Sigmoid colon (tissue), 7 donors: ENCODE measurements at regions of chr1 and their contacts with region 1.

Region 1: DNA sequence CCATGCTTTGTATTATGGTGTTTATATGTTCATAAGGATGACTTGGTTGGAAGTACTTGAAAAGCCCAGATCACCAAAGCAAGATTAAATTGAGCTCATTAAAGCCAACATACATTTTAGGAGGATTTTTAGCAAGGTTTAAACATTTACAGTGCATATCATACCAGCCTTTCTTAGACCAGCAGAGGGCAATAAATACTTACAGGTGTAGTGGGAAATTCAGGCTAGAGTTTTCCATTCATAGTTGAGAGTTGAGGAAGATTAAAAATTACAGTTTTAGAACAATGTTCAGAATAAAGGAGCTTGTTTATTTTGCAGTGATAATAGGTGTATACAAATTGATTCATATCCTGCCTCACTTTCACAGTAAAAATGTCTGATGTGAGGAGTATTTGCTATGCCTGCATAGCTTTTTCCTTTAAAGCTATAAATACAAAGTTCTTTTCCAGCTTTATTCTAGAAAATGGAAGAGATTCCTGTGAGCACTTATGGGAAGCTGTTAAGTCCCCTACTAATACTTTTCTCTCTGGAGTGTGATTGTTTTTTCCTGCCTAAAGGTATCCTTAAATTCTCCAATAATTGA is 35.3 kb downstream of the DTL start:
- DNase-seq: no peak
- H3K4me3 ChIP-seq: no peak overlapping the region
- H3K27ac ChIP-seq: no peak overlapping the region
- H3K4me1 ChIP-seq: no peaks in the 10 kb centered on the region
- H3K27me3 ChIP-seq: no peaks in the 10 kb centered on the region
- CTCF ChIP-seq: peak; percentile 61 to 79 (median 71)
- EP300 ChIP-seq: no peak
- POLR2A ChIP-seq: no peak

Region 2: DNA sequence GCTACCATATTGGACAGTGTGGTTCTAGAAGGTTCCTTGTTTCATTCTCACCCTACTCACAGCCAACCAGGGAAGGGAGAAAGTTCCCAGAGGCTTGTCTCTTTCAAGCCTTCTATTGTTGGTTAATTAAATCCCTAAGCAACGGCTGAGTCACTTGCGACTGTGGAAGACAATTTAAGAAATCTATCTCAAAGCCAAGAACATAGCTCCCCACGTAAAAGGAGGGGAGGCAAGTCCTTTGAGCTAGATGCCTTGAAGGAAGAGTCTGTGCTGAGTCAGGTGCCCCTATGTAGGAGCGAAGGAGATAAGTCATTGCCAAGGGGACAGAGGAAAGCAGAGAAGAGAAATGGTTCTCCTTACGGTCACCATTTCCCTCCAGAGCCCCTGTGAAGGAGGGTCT is 135.0 kb after region 1 on chr1:
- intact Hi-C with region 1: no loop called
- DNase-seq: no peak
- H3K4me3 ChIP-seq: no peak overlapping the region
- H3K27ac ChIP-seq: no peak overlapping the region
- H3K4me1 ChIP-seq: no peaks in the 10 kb centered on the region
- H3K27me3 ChIP-seq: no peaks in the 10 kb centered on the region
- CTCF ChIP-seq: no peak
- EP300 ChIP-seq: no peak
- POLR2A ChIP-seq: no peak

Region 3: GRCh38 chr1:212291505-212292134 is 220.8 kb after region 1 on chr1:
- intact Hi-C with region 1: loop called (anchors 2 kb)
- DNase-seq: no peak
- H3K4me3 ChIP-seq: no peak overlapping the region
- H3K27ac ChIP-seq: no peak overlapping the region
- H3K4me1 ChIP-seq: peaks cover 0 to 68% (median 57%) of the 10 kb centered on the region in 4 donors
- H3K27me3 ChIP-seq: no peaks in the 10 kb centered on the region
- CTCF ChIP-seq: peak in 3 of 4 experiments; percentile 35 to 54 (median 47)
- EP300 ChIP-seq: no peak
- POLR2A ChIP-seq: no peak

Region 4: DNA sequence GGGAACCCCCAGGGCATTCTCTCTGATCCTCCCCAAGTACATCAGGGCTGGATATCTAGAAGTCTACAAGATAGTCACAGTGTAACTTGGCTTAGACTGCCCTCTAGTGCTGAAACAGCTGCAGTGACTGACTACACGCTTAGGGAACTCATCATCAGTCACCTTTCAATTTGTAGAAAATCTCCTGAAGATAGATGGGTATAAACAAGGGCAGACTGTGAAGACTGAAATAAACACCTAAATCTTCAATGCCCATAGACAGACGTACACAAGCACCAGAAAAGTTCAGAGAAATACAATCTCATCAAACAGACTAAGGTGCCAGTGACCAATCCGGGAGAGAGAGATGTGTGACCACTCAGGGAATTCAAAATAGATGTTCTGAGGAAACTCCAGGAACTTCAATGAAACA is 297.3 kb after region 1 on chr1:
- intact Hi-C with region 1: loop called (anchors 2 kb)
- DNase-seq: no peak
- H3K4me3 ChIP-seq: no peak overlapping the region
- H3K27ac ChIP-seq: no peak overlapping the region
- H3K4me1 ChIP-seq: peaks cover 0 to 3% (median 0%) of the 10 kb centered on the region in 4 donors
- H3K27me3 ChIP-seq: no peaks in the 10 kb centered on the region
- CTCF ChIP-seq: peak; percentile 57 to 85 (median 71)
- EP300 ChIP-seq: no peak
- POLR2A ChIP-seq: no peak